Naive thymus-derived CD4-positive, alpha-beta T cell (primary cell): ENCODE measurements at regions of chr2 and their contacts with region 1.

Region 1: GRCh38 chr2:43773876-43774613 is at the start of gene DYNC2LI1:
- DNase-seq: peak; percentile 44 to 81 (median 65)
- ATAC-seq: peak; percentile 97
- H3K4me3 ChIP-seq: peak within 1 kb of the TSS; percentile 75
- H3K4me3 Mint-ChIP-seq: peak within 1 kb of the TSS; percentile 92 to 99 (median 96)
- H3K27ac ChIP-seq: peak within 1 kb of the TSS; percentile 67
- H3K27ac Mint-ChIP-seq: peak within 1 kb of the TSS; percentile 35 to 93 (median 79)
- H3K4me1 ChIP-seq: no peaks in the 10 kb centered on the region
- H3K4me1 Mint-ChIP-seq: peaks cover 10 to 21% (median 13%) of the 10 kb centered on the region in 7 donors
- H3K27me3 ChIP-seq: no peaks in the 10 kb centered on the region
- H3K27me3 Mint-ChIP-seq: peaks cover 0 to 4% (median 0%) of the 10 kb centered on the region in 5 donors
- total RNA-seq, gene DYNC2LI1: 1.9 to 6.1 (median 5.1) TPM

Region 2: DNA sequence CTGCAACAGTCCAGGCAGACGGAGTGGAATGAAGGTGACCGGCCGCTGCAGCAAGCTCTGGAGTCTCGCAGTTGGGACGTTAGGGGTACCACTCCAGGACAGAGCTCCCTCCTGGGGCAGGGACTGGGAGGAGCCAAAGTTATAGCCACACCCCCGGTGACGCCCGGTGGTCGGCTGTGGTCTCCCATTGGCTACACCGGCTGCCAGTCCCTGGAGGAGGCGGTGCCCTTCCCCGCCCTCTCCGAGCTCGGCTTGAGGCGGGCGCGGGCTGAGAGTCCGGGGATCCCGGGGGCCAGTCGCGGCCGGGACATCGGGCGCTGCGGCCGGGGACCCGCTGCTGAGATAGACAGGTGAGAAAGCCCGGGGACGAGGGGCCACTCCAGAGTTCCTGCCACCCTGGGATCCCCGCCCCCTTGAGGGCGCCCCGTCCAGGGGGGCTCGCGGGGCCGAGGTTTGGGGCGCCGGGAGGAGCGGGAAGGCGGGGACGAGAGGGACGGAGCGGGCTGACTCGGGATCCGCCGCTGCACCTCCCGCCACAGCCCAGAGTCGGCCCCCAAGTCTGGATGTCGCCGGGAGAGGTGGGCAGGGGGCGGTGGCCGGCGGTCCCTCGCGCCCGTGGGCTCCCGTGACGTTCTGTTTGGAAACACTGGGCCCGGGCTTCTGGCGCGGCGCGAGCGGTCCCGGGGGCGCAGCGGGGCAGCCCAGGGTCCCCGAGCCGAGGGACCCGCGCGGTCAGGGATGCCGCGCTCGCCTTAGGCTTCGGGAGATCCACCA is 136.8 kb before region 1 on chr2 and contains the start of gene PLEKHH2:
- CTCF ChIA-PET with region 1: no interaction called
- POLR2A ChIA-PET with region 1: no interaction called
- intact Hi-C with region 1: loop called (anchors 2 to 5 kb)
- DNase-seq: peak; percentile 69 to 89 (median 84)
- ATAC-seq: peak; percentile 100
- H3K4me3 ChIP-seq: peak within 1 kb of the TSS; percentile 93
- H3K4me3 Mint-ChIP-seq: peak within 1 kb of the TSS; percentile 87 to 100 (median 95)
- H3K27ac ChIP-seq: peak within 1 kb of the TSS; percentile 56
- H3K27ac Mint-ChIP-seq: peak within 1 kb of the TSS; percentile 10 to 90 (median 80)
- H3K4me1 ChIP-seq: peaks cover 0 to 10% of the 10 kb centered on the region in 2 donors
- H3K4me1 Mint-ChIP-seq: peaks cover 6 to 21% (median 19%) of the 10 kb centered on the region in 7 donors
- H3K27me3 ChIP-seq: peaks cover 0 to 4% of the 10 kb centered on the region in 2 donors
- H3K27me3 Mint-ChIP-seq: peaks cover 16 to 55% (median 28%) of the 10 kb centered on the region in 5 donors
- total RNA-seq, gene PLEKHH2: 0.02 to 2.8 (median 2.0) TPM

Region 3: DNA sequence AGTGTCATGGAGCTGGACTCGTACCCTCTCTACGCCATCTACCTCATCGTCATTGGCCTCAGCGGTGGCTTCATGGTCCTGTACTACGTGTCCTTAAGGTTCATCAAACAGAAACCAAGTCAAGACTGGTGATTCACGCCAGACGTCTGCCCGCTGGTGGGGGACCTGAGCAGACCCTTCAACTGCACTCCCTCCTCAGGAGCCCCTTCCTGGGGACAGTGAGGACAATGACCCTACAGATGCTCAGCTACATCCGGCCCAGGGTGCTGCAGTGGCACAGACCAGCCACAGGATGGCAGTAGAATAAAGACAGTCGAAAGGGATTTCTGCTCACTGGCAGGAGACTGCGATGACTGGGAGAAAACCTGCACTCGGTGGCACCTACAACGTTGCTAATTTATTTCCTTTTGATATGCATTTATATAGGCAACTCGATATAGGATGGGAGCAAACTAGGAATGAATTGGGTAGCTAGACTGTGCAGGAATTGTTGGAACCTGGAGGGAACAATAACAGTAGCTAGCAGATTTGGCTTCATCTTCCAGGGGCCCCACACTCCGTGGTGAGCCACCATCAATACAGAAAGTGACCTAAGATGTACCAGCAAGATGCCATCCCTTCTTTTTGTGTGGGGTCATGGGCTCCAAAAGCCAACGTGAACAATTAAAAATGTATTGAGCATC is 103.9 kb after region 1 on chr2:
- CTCF ChIA-PET with region 1: no interaction called
- POLR2A ChIA-PET with region 1: no interaction called
- intact Hi-C with region 1: no loop called
- DNase-seq: peak; percentile 16 to 68 (median 47)
- ATAC-seq: peak; percentile 86
- H3K4me3 ChIP-seq: no peak overlapping the region
- H3K4me3 Mint-ChIP-seq: peak overlapping the region in 2 of 10 donors; percentile 54 to 58
- H3K27ac ChIP-seq: no peak overlapping the region
- H3K27ac Mint-ChIP-seq: no peak overlapping the region
- H3K4me1 ChIP-seq: no peaks in the 10 kb centered on the region
- H3K4me1 Mint-ChIP-seq: peaks cover 0 to 6% (median 5%) of the 10 kb centered on the region in 7 donors
- H3K27me3 ChIP-seq: no peaks in the 10 kb centered on the region
- H3K27me3 Mint-ChIP-seq: peaks cover 3 to 32% (median 16%) of the 10 kb centered on the region in 5 donors

Region 4: DNA sequence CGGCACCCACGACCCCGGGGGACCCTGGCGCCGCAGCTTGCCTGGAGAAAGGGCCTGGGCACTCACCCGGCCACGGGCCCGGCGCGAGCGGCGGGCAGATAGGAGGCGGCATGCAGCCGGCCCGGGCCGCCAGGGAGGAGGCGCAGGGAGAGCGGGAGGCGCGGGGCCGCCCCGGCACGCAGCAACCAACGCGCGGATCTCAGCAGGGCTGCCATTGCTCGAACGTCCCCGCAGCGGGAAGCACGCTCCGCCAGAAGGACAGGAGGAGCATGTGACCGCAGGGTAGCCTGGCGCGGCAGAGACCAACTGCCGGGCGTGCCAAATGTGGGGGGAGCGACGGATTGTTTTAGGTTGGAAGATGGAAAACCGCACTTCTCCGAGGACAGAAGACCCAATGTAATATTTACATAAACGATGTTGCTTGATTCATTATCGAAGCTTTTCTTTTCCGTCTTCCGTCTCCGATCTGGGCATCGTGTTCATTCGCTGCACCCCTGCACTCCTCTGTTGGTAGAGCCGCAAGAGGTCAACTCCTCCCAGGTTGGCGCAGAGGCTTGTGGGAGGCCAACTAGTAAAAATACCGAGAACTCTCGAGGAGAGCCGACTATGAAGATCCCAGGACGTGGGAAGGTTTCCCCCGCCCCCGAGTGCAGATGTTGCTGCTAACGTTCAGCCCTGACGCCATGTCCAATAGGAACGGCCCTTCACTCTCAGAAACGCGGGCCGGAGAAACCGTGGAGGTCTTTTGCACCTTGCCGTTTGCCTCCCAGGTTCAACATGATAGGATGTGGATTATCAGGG is 221.9 kb after region 1 on chr2 and contains the start of gene LRPPRC:
- CTCF ChIA-PET with region 1: no interaction called
- POLR2A ChIA-PET with region 1: no interaction called
- intact Hi-C with region 1: loop called (anchors 1 kb)
- DNase-seq: peak; percentile 69 to 95 (median 90)
- ATAC-seq: peak; percentile 98
- H3K4me3 ChIP-seq: peak within 1 kb of the TSS; percentile 98
- H3K4me3 Mint-ChIP-seq: peak within 1 kb of the TSS; percentile 89 to 99 (median 90)
- H3K27ac ChIP-seq: peak within 1 kb of the TSS; percentile 84
- H3K27ac Mint-ChIP-seq: peak within 1 kb of the TSS; percentile 95 to 100 (median 97)
- H3K4me1 ChIP-seq: peaks cover 9 to 25% of the 10 kb centered on the region in 2 donors
- H3K4me1 Mint-ChIP-seq: peaks cover 34 to 62% (median 52%) of the 10 kb centered on the region in 7 donors
- H3K27me3 ChIP-seq: no peaks in the 10 kb centered on the region
- H3K27me3 Mint-ChIP-seq: peaks cover 0 to 1% (median 0%) of the 10 kb centered on the region in 5 donors
- total RNA-seq, gene LRPPRC: 54.3 to 92.7 (median 71.2) TPM